Panc1 (cell line): ENCODE measurements at regions of chr19 and their contacts with region 1.

Region 1: GRCh38 chr19:39057615-39058014 is 25.3 kb upstream of the FBXO27 start:
- DNase-seq: no peak
- ATAC-seq: no peak
- H3K4me3 ChIP-seq: no peak overlapping the region
- H3K27ac ChIP-seq: 0 out of 2 replicates have a peak overlapping the region, but pooled peaks have one; percentile 0
- H3K4me1 ChIP-seq: no peaks in the 10 kb centered on the region
- H3K27me3 ChIP-seq: no peaks in the 10 kb centered on the region
- CTCF ChIP-seq: no peak

Region 2: DNA sequence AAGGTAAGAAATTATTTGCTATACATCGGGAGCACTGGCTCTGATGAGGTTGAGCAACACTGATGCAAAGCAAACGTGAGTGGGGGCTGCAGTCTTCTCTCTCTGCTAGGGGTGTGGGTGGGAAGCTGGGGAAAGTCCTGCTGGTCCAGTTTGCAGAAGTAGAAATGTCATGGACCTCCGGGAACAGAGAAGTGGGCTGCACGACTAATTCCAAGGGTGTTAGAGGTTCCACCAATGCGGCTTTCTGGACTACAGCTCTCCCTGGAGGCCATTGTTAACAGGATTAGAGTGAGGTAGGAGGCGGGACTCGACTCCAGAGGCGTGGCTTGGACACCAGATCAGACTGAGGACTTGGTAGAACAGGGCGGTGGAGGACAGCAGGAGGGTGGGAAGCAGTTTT is 19.5 kb before region 1 on chr19:
- CTCF ChIA-PET with region 1: interaction called, 21 read pairs
- POLR2A ChIA-PET with region 1: interaction called, 11 read pairs
- in situ Hi-C with region 1: no loop called
- intact Hi-C with region 1: no loop called
- DNase-seq: no peak
- ATAC-seq: peak; percentile 96
- H3K4me3 ChIP-seq: peak overlapping the region in 1 of 2 experiments; percentile 5; a peak in 2 of 4 replicates
- H3K27ac ChIP-seq: peak overlapping the region; percentile 3; the same call in 1 of the 2 replicates
- H3K4me1 ChIP-seq: peaks cover 11% of the 10 kb centered on the region
- H3K27me3 ChIP-seq: no peaks in the 10 kb centered on the region
- CTCF ChIP-seq: no peak

Region 3: GRCh38 chr19:39144245-39145071 is 86.8 kb after region 1 on chr19:
- CTCF ChIA-PET with region 1: no interaction called
- POLR2A ChIA-PET with region 1: no interaction called
- in situ Hi-C with region 1: no loop called
- intact Hi-C with region 1: no loop called
- DNase-seq: no peak
- ATAC-seq: peak; percentile 64
- H3K4me3 ChIP-seq: no peak overlapping the region
- H3K27ac ChIP-seq: peak overlapping the region; percentile 0; the same call in 1 of the 2 replicates
- H3K4me1 ChIP-seq: peaks cover 31% of the 10 kb centered on the region
- H3K27me3 ChIP-seq: no peaks in the 10 kb centered on the region
- CTCF ChIP-seq: no peak

Region 4: DNA sequence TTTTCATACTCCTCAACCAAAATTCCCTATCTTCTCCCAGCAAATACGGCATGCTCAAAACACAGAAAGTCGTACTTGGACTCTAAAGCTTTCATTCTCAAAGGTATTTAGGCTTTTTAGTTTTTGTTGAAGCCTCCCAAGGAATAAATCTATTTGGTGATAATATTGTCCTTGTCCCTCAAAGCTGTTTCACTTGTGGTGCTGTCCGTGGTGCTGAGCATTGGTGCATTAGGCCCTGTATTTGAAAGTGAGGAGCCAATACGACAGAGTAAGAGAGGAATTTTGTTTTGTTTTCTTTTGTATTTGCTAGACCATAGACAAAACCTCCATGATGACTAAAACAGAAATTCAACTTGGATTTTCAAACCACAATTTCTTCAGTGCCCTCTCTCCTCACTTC is 541.5 kb after region 1 on chr19:
- CTCF ChIA-PET with region 1: no interaction called
- POLR2A ChIA-PET with region 1: interaction called, 13 read pairs
- in situ Hi-C with region 1: no loop called
- intact Hi-C with region 1: no loop called
- DNase-seq: no peak
- ATAC-seq: no peak
- H3K4me3 ChIP-seq: no peak overlapping the region
- H3K27ac ChIP-seq: no peak overlapping the region
- H3K4me1 ChIP-seq: no peaks in the 10 kb centered on the region
- H3K27me3 ChIP-seq: peaks cover 88% of the 10 kb centered on the region
- CTCF ChIP-seq: 0 out of 2 replicates have a peak, but pooled peaks have one; percentile 1

Region 5: DNA sequence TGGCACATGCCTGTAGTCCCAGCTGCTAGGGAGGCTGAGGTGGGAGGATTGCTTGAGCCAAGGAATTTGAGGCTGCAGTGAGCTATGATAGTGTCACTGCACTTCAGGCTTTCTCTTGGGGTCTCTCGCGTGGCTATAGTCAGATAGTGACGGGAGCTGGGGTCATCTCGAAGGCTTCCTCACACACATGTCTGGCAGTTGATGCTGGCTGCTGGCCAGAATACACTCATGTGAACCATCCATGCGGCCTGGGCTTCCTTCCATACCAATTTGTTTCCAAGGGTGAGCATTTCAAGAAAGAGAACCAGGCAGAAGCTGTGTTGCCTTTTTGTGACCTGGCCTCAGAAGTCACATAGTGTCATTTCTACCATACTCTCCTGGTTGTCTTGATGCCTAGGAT is 747.5 kb after region 1 on chr19:
- CTCF ChIA-PET with region 1: no interaction called
- POLR2A ChIA-PET with region 1: no interaction called
- in situ Hi-C with region 1: no loop called
- intact Hi-C with region 1: loop called (anchors 2 kb)
- DNase-seq: no peak
- ATAC-seq: no peak
- H3K4me3 ChIP-seq: no peak overlapping the region
- H3K27ac ChIP-seq: no peak overlapping the region
- H3K4me1 ChIP-seq: peaks cover 6% of the 10 kb centered on the region; the same call in 1 of the 2 replicates
- H3K27me3 ChIP-seq: peaks cover 29% of the 10 kb centered on the region
- CTCF ChIP-seq: no peak